ENCODE measurements at regions of chr12 and their contacts with region 1.

Region 1: GRCh38 chr12:33245434-33245833 is 194.2 kb downstream of the SYT10 start:
- DNase-seq: no peak
- ATAC-seq: no peak
- H3K4me3 ChIP-seq: no peak overlapping the region
- H3K27ac ChIP-seq: no peak overlapping the region
- H3K4me1 ChIP-seq: no peaks in the 10 kb centered on the region
- H3K27me3 ChIP-seq: no peaks in the 10 kb centered on the region
- CTCF ChIP-seq: no peak

Region 2: GRCh38 chr12:32997471-32997870 is 248.0 kb before region 1 on chr12:
- intact Hi-C with region 1: no loop called
- DNase-seq: no peak
- ATAC-seq: no peak
- H3K4me3 ChIP-seq: no peak overlapping the region
- H3K27ac ChIP-seq: no peak overlapping the region
- H3K4me1 ChIP-seq: no peaks in the 10 kb centered on the region
- H3K27me3 ChIP-seq: no peaks in the 10 kb centered on the region
- CTCF ChIP-seq: no peak

Region 3: GRCh38 chr12:33180930-33181329 is 64.5 kb before region 1 on chr12:
- intact Hi-C with region 1: loop called in 1 of 3 experiments (anchors 10 kb)
- DNase-seq: no peak
- ATAC-seq: no peak
- H3K4me3 ChIP-seq: no peak overlapping the region
- H3K27ac ChIP-seq: no peak overlapping the region
- H3K4me1 ChIP-seq: no peaks in the 10 kb centered on the region
- H3K27me3 ChIP-seq: no peaks in the 10 kb centered on the region
- CTCF ChIP-seq: no peak